Gastrocnemius medialis (tissue), 4 donors: ENCODE measurements at regions of chr17 and their contacts with region 1.

Region 1: GRCh38 chr17:59331129-59331928 is at the start of gene YPEL2:
- DNase-seq: peak; percentile 97 to 98
- ATAC-seq: peak; percentile 61 to 68
- H3K4me3 ChIP-seq: peak within 1 kb of the TSS; percentile 85 to 95 (median 89)
- H3K27ac ChIP-seq: peak within 1 kb of the TSS; percentile 96 to 98 (median 96)
- H3K4me1 ChIP-seq: peaks cover 55 to 64% of the 10 kb centered on the region in 2 donors
- H3K27me3 ChIP-seq: no peaks in the 10 kb centered on the region
- CTCF ChIP-seq: peak in 2 of 5 experiments; percentile 21 to 31
- POLR2A ChIP-seq: peak; percentile 89 to 98
- total RNA-seq, gene YPEL2: 18.9 to 27.4 (median 22.2) TPM

Region 2: DNA sequence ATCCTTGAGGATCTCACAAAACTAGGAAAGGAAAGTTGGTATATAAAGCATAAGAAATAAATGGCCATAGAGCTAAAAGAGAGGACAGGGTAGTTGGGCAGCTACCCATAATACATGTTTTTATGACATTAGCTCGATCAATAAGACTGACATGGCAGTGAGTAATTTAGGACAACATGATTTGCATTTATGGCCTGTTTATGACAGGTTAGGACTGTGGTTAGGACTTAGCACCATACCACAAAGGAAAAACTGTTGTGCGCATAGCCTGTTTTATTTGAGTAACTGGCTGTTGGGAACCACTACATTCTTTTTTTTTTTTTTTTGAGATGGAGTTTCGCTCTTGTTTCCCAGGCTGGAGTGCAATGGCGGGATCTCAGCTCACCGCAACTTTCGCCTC is 206.7 kb before region 1 on chr17:
- in situ Hi-C with region 1: no loop called
- intact Hi-C with region 1: no loop called
- DNase-seq: no peak
- ATAC-seq: no peak
- H3K4me3 ChIP-seq: no peak overlapping the region
- H3K27ac ChIP-seq: no peak overlapping the region
- H3K4me1 ChIP-seq: no peaks in the 10 kb centered on the region
- H3K27me3 ChIP-seq: no peaks in the 10 kb centered on the region
- CTCF ChIP-seq: no peak
- POLR2A ChIP-seq: no peak

Region 3: DNA sequence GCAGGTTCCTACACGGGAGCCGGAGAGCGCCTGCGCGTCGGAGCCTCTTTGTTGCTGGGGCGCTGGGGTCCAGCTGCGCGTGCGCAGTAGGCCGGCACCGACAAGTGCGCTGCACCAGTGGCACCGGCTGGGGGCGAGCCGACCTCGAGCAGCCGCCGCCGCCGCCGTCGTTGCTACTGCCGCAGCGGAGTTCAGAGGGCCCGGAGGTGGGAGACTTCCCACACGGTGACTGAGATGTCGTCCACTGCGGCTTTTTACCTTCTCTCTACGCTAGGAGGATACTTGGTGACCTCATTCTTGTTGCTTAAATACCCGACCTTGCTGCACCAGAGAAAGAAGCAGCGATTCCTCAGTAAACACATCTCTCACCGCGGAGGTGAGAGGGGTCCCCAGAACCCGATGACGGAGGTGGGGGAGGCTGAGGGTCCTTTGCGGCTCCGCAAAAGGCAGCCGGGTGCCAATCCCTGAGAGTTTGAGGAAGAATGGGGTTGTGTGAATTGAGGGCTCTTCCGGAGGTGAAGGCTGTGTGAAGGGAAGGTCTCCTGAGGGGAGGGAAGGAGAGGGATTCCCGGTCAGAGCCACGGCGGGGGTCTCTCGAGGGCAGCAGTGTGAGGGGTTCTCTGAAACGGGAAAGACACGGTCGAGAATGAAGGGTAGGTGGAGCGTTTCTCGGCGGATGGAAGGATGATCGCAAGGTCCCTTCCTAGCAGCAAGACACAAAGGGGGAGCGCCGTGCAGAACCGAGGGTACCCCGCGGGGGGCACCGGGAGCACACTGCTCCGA is 110.8 kb before region 1 on chr17 and contains the start of gene GDPD1:
- in situ Hi-C with region 1: no loop called
- intact Hi-C with region 1: loop called (anchors 1 kb)
- DNase-seq: peak; percentile 90 to 93
- ATAC-seq: peak; percentile 93 to 97
- H3K4me3 ChIP-seq: peak within 1 kb of the TSS; percentile 76 to 100 (median 96)
- H3K27ac ChIP-seq: peak within 1 kb of the TSS; percentile 75 to 90 (median 88)
- H3K4me1 ChIP-seq: peaks cover 4 to 5% of the 10 kb centered on the region in 2 donors
- H3K27me3 ChIP-seq: no peaks in the 10 kb centered on the region
- CTCF ChIP-seq: peak; percentile 63 to 82 (median 74)
- POLR2A ChIP-seq: no peak
- total RNA-seq, gene GDPD1: 0.29 to 0.95 (median 0.29) TPM in 3 of 4 donors, not detected in the other

Region 4: GRCh38 chr17:59311130-59311920 is 20.0 kb before region 1 on chr17:
- in situ Hi-C with region 1: no loop called
- intact Hi-C with region 1: loop called (anchors 1 kb)
- DNase-seq: no peak
- ATAC-seq: peak; percentile 96 to 99
- H3K4me3 ChIP-seq: no peak overlapping the region
- H3K27ac ChIP-seq: no peak overlapping the region
- H3K4me1 ChIP-seq: peaks cover 6% of the 10 kb centered on the region in 2 donors
- H3K27me3 ChIP-seq: no peaks in the 10 kb centered on the region
- CTCF ChIP-seq: peak; percentile 81 to 89 (median 87)
- POLR2A ChIP-seq: no peak

Region 5: GRCh38 chr17:59387351-59388068 is 56.2 kb after region 1 on chr17:
- in situ Hi-C with region 1: no loop called
- intact Hi-C with region 1: loop called (anchors 1 kb)
- DNase-seq: peak; percentile 80 to 84
- ATAC-seq: peak; percentile 95 to 98
- H3K4me3 ChIP-seq: peak overlapping the region in 2 of 4 donors; percentile 3 to 7
- H3K27ac ChIP-seq: peak overlapping the region; percentile 86 to 98 (median 93)
- H3K4me1 ChIP-seq: peaks cover 45 to 50% of the 10 kb centered on the region in 2 donors
- H3K27me3 ChIP-seq: no peaks in the 10 kb centered on the region
- CTCF ChIP-seq: peak in 2 of 5 experiments; percentile 9 to 13
- POLR2A ChIP-seq: no peak

Region 6: GRCh38 chr17:59440784-59441441 is 109.6 kb after region 1 on chr17:
- in situ Hi-C with region 1: loop called in 1 of 4 experiments (anchors 5 kb)
- intact Hi-C with region 1: loop called (anchors 1 kb)
- DNase-seq: peak; percentile 82 to 89
- ATAC-seq: peak; percentile 94 to 99
- H3K4me3 ChIP-seq: no peak overlapping the region
- H3K27ac ChIP-seq: peak overlapping the region; percentile 63 to 72 (median 68)
- H3K4me1 ChIP-seq: peaks cover 14 to 36% of the 10 kb centered on the region in 2 donors
- H3K27me3 ChIP-seq: no peaks in the 10 kb centered on the region
- CTCF ChIP-seq: peak; percentile 82 to 93 (median 88)
- POLR2A ChIP-seq: no peak